ENCODE measurements at regions of chr17 and their contacts with region 1.

Region 1: GRCh38 chr17:31524926-31525800 is 133.7 kb downstream of the RAB11FIP4 start:
- DNase-seq: peak; percentile 67
- H3K4me3 Mint-ChIP-seq: no peak overlapping the region
- H3K27ac Mint-ChIP-seq: no peak overlapping the region
- H3K4me1 Mint-ChIP-seq: no peaks in the 10 kb centered on the region
- H3K27me3 Mint-ChIP-seq: no peaks in the 10 kb centered on the region

Region 2: DNA sequence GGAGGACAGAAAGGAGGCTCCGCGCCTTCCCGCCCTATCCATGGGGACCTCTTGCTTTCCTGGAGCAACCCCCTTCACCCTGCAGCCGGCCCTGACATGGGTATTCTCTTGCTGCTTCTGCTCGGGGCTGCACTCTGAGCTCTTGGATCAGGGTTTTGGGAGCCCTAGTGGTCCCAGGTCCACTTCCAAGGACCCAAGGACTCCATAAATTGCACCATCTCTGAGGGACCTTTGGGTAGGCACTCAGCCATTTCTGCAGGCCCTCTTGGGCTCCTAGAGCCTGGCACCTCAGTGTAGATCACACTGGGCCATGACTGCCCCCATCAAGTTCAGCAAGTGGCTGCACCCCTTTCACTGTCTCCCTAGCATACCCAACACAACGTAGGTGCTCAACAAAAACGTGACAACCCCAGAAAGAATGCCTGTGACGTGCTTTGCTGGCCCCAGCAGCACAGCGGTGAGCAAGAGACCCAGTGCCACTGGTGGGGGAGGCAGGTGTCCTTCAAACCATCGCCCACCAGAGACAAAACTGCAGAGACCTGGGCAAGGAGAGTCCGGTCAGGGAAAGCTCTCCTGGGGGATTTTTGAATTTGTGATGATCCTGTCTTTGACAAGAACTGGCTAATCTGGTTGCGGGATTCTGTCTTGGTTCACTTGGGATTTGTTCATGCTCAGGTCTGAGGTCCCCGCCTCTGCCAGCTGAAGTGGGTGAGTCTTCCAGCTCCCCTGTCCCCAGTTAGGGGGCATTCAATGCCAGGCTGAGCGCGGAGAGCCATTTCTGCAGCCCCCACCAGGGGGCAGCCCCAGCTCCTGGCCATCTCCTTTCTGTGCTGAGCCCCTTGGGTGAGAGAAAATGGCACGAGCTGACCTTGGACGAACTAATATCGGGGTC is 136.1 kb before region 1 on chr17:
- intact Hi-C with region 1: loop called (anchors 1 kb)
- DNase-seq: no peak
- H3K4me3 Mint-ChIP-seq: no peak overlapping the region
- H3K27ac Mint-ChIP-seq: no peak overlapping the region
- H3K4me1 Mint-ChIP-seq: peaks cover 6% of the 10 kb centered on the region
- H3K27me3 Mint-ChIP-seq: peaks cover 42% of the 10 kb centered on the region

Region 3: DNA sequence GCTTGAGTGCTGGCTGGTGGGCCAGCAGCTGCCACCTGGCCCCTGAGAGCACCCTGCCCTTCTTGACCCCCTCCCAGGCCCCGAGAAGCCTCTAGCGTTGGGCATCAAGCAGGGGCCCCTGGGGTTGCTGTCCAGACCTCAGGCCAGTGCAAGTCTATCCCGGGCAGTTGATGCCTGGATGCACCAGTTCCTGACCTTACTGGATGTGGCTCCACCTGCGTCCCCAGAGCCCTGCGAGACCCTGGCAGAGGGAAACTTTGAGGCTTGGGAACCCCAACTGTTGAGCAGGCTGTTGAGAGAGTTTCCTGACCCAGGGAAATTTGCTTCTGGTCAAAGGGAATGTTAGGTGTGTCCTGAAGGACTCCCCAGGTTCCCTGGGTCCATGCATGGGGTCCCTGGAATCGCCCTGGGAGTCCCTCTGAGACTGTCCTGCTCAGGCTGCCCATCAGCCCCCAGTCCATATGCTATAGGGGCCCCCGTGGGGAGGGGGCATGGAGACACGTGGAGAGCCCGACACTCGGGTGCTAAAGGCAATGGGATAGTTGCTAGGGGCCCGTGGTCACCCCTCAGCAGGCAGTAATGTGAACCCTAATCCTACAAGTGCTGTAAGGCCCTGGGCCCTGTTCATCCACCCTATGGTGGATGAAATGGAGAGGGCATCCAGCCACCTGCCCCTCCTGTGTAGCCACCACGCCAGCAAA is 87.3 kb before region 1 on chr17:
- intact Hi-C with region 1: loop called (anchors 1 kb)
- DNase-seq: no peak
- H3K4me3 Mint-ChIP-seq: no peak overlapping the region
- H3K27ac Mint-ChIP-seq: no peak overlapping the region
- H3K4me1 Mint-ChIP-seq: peaks cover 6% of the 10 kb centered on the region
- H3K27me3 Mint-ChIP-seq: peaks cover 21% of the 10 kb centered on the region

Region 4: DNA sequence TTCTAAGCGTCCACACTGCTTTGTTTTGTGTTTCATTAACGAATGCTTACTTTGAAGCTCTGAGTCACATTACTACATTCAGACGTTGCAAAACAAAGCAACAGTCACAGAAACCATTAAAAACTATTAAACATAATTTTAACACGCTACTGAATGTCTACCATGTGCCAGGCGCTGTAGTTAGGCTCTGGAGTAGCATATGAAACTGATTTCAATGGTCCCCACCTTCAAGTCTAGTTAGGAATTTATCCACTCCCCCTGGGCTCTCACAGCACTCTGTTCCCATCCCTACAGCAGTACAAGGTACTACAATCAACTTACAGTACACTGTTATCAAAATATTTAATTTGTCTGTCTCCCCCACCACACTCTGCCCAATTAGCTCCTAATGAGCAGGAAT is 375.7 kb after region 1 on chr17:
- intact Hi-C with region 1: no loop called
- DNase-seq: no peak
- H3K4me3 Mint-ChIP-seq: no peak overlapping the region
- H3K27ac Mint-ChIP-seq: no peak overlapping the region
- H3K4me1 Mint-ChIP-seq: peaks cover 5% of the 10 kb centered on the region
- H3K27me3 Mint-ChIP-seq: no peaks in the 10 kb centered on the region